AG04449 (cell line): ENCODE measurements at regions of chr1 and their contacts with region 1.

Region 1: DNA sequence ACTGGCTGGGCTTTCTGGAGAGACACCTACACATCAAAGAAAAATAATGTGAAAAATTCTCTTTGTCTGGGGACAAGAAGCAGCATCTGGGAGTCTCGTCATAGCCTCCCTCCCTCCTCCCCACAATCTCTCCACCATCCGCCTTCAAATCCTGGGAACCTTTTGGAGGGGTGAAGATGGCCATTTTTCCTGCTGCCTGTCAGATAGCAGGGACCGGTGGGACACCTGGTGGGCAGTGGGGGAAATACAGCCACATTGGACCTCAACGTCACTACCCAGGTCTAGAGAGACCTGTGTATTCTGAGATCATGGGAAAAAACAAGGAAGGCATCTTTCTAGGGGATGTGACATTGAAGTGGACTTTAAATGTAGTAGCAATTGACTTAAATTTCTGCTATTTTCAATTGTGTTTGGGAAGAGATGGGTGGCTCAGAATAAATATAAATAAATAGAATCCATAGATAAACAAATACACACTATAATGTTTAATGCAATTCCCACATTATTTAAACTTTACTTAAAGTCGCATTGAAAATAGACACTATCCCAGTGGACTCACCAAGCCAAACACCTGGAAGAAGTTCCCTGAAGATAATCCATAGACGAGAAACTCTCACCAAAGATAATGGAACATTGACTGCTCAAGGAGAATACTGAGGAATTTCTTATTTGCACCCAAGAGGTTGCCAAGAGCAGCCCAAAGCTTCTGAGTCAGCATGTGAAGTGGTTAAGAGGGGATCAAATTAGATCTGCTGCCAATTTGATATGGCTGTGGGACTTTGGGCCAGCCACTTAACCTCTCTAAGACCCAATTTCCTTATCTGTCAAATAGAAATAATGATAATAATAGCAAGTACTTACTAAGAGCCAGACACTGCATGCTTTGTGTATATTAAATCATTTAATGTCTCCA is 147.6 kb upstream of the CAMK1G start:
- DNase-seq: no peak
- H3K4me3 ChIP-seq: no peak overlapping the region
- CTCF ChIP-seq: peak; percentile 95

Region 2: GRCh38 chr1:209416039-209416438 is 19.9 kb before region 1 on chr1:
- CTCF ChIA-PET with region 1: interaction called, 52 read pairs
- POLR2A ChIA-PET with region 1: no interaction called
- DNase-seq: no peak
- H3K4me3 ChIP-seq: no peak overlapping the region
- CTCF ChIP-seq: no peak

Region 3: GRCh38 chr1:209455145-209455544 is 19.2 kb after region 1 on chr1:
- CTCF ChIA-PET with region 1: interaction called, 20 read pairs
- POLR2A ChIA-PET with region 1: no interaction called
- DNase-seq: no peak
- H3K4me3 ChIP-seq: no peak overlapping the region
- CTCF ChIP-seq: no peak